ENCODE measurements at regions of chr3 and their contacts with region 1.

Region 1: DNA sequence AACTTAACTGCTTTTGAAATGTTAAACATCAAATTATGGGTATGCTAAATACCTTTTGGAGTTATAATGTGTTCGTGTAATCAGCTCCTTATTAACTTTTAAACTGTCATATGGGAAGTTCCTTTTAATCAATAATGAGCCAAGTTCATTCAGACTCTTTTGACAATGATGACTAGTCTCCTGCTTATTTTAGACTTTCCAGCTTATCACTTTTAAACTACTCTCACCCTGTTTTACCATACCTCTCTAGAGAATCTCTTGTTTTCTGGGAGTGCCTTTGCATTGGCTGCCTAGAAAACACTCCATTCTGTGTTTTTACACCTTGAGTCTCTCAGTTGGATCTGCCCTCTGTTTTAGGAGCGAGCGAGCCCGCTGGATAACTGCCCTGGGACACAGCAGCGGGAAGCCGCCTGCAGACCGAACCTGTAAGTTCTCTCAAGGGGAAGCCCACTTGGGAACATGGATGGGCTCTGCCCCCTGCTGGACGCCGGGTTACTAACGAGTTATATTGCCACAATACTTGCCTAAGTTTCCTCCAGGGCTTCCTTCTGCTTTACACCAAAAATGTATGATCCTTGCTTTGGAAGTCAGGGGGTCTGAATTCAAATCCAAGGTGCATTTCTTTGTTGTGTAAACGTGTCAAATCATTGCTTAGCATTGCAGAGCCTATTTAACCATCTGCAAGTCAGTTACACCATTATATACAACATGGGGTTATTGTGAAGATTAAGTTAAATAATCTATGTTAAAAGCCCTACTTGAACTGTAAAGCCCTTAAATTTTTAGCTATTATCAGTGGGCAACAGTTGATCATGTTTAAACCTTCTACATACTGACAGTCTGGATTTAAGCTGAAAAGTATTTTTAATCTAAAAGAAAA is 71.3 kb downstream of the DHX36 start:
- DNase-seq: peak; percentile 72
- H3K4me3 ChIP-seq: no peak overlapping the region
- H3K27ac ChIP-seq: no peak overlapping the region
- H3K27me3 ChIP-seq: no peaks in the 10 kb centered on the region
- CTCF ChIP-seq: peak; percentile 97

Region 2: DNA sequence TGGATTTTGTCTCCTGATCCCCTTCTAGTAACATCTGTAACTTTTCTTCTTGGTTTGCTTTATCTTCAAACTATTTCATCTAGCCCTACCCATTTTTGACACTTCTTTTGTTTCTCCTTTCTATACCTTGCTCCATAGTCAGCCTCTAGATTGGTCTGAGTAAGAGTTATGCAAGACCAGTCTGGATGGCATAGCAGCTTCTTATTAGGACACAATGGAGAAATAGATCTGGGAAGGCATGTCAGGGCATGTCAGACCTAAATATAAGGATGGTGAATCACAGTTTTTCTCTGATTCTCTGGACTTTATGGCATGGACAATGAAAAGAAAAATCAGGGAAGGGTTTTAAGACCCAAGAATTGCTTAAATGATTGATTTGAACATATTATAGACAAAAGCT is 638.4 kb before region 1 on chr3:
- CTCF ChIA-PET with region 1: no interaction called
- POLR2A ChIA-PET with region 1: no interaction called
- DNase-seq: peak; percentile 23
- H3K4me3 ChIP-seq: no peak overlapping the region
- H3K27ac ChIP-seq: no peak overlapping the region
- H3K27me3 ChIP-seq: no peaks in the 10 kb centered on the region
- CTCF ChIP-seq: no peak

Region 3: GRCh38 chr3:154095832-154096421 is 157.1 kb before region 1 on chr3:
- CTCF ChIA-PET with region 1: interaction called, 57 read pairs
- POLR2A ChIA-PET with region 1: no interaction called
- DNase-seq: peak; percentile 4
- H3K4me3 ChIP-seq: no peak overlapping the region
- H3K27ac ChIP-seq: no peak overlapping the region
- H3K27me3 ChIP-seq: no peaks in the 10 kb centered on the region
- CTCF ChIP-seq: peak; percentile 66

Region 4: GRCh38 chr3:154120961-154121700 is 131.9 kb before region 1 on chr3 and contains the start of gene ARHGEF26:
- CTCF ChIA-PET with region 1: interaction called, 32 read pairs
- POLR2A ChIA-PET with region 1: no interaction called
- DNase-seq: peak; percentile 29
- H3K4me3 ChIP-seq: peak within 1 kb of the TSS; percentile 78
- H3K27ac ChIP-seq: no peak within 1 kb of the TSS
- H3K27me3 ChIP-seq: no peaks in the 10 kb centered on the region
- CTCF ChIP-seq: no peak
- polyA plus RNA-seq, gene ARHGEF26: 0.56 and 0.98 TPM in 2 replicates

Region 5: GRCh38 chr3:154235330-154235729 is 17.7 kb before region 1 on chr3:
- CTCF ChIA-PET with region 1: interaction called, 14 read pairs
- POLR2A ChIA-PET with region 1: no interaction called
- DNase-seq: no peak
- H3K4me3 ChIP-seq: no peak overlapping the region
- H3K27ac ChIP-seq: no peak overlapping the region
- H3K27me3 ChIP-seq: no peaks in the 10 kb centered on the region
- CTCF ChIP-seq: no peak